PC-3 (cell line): ENCODE measurements at regions of chr18 and their contacts with region 1.

Region 1: DNA sequence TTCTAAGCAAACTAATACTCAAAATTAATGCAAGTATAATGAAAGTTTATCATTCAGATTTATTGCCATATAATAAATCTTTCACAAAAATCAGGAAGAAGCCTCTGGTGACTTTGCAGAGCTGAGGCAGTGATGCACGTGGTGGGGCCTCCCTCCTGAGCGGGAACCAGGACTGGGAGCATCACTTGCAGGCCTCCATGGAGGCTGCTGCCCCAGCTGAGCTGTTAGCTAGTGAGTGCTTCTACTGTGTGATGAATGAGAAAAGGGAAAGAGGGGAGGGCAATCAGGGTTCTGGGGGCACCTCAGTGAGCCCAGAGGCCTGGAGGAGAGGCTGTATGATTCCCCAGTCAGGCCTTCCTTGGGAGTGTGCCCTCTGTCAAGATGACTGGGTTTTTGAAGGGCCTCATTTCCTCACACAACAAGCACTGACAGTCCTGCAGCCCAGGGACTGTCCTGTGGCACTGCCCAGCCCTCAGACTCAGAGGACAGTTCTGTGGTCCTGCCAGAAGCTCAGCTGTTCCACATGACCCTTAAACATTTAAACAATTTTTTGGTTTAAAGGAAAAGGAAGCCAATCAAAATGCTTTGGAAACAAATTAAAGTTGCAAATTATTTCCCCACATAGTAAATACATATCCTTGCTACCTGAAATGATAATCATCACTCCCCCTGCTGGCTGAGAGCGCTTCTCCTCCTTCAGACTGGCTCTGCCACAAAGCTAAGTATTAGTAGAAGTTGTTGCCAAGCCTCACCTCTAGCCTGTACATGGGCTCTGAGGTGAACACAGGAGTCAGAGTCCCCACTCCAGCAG is 90.9 kb upstream of the SMAD7 start:
- DNase-seq: peak; percentile 46
- ATAC-seq: peak; percentile 78
- H3K4me3 ChIP-seq: no peak overlapping the region
- H3K27ac ChIP-seq: no peak overlapping the region
- H3K4me1 ChIP-seq: no peaks in the 10 kb centered on the region
- H3K27me3 ChIP-seq: no peaks in the 10 kb centered on the region
- CTCF ChIP-seq: peak; percentile 54

Region 2: GRCh38 chr18:48675352-48675761 is 366.3 kb before region 1 on chr18:
- CTCF ChIA-PET with region 1: no interaction called
- POLR2A ChIA-PET with region 1: no interaction called
- intact Hi-C with region 1: loop called (anchors 5 kb)
- DNase-seq: peak; percentile 67
- ATAC-seq: peak; percentile 97
- H3K4me3 ChIP-seq: no peak overlapping the region
- H3K27ac ChIP-seq: no peak overlapping the region
- H3K4me1 ChIP-seq: no peaks in the 10 kb centered on the region
- H3K27me3 ChIP-seq: no peaks in the 10 kb centered on the region
- CTCF ChIP-seq: peak; percentile 66

Region 3: DNA sequence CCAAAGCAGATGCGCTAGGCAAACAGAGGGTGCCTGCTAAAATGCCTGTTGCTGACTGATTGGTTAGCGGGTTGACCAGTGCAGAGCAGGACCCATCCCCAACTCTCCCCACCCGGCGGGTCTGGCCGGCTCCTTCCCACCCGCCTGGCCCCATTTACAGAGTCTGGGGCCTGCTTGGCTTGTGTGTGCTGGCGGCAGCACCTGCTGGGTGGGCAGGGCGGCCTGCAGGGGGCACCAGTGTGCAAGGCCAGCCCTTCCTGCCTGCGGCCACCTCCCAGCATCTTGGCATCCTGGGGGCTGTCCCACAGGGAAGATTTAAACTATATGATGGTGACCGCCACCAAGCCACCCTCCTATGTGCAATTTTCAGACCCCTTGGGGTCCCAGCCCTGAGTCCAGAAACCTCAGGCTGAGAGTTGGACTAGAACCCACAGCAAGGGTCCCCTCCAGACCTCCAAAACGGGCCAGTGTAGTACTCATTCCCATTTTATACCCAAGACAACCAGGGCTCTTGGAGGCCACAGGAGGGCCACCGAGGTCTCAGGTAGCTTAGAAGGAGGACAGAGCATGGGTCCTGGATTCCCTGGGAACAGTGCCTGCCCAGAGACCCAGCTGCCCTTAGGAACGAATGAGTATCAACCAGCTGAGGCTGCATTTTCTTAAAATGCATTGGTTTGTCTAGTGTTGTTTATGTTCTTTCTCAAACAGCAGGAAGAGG is 264.5 kb before region 1 on chr18:
- CTCF ChIA-PET with region 1: no interaction called
- POLR2A ChIA-PET with region 1: no interaction called
- intact Hi-C with region 1: loop called (anchors 5 kb)
- DNase-seq: peak; percentile 30
- ATAC-seq: peak; percentile 87
- H3K4me3 ChIP-seq: no peak overlapping the region
- H3K27ac ChIP-seq: no peak overlapping the region
- H3K4me1 ChIP-seq: no peaks in the 10 kb centered on the region
- H3K27me3 ChIP-seq: no peaks in the 10 kb centered on the region
- CTCF ChIP-seq: peak; percentile 67

Region 4: DNA sequence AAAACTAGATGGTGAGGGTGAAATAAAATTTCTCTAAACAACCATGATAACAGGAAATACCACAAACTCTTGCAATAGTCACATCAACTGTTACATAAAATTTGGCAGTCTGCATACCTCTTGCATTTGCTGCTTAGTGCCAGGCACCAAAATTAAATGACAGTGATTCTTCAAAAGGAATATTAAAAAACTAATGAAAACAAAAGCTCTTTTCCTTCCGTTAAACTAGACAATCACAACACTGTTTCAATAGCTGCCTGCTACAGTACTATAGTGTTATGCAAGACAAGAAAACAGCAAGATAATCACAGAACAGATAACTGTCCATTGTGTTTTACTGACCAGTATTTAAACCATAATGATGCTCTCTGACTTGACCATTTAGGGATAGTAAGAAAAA is 148.1 kb after region 1 on chr18:
- CTCF ChIA-PET with region 1: no interaction called
- POLR2A ChIA-PET with region 1: no interaction called
- intact Hi-C with region 1: no loop called
- DNase-seq: no peak
- ATAC-seq: no peak
- H3K4me3 ChIP-seq: no peak overlapping the region
- H3K27ac ChIP-seq: no peak overlapping the region
- H3K4me1 ChIP-seq: peaks cover 4% of the 10 kb centered on the region; the same call in 1 of the 2 replicates
- H3K27me3 ChIP-seq: no peaks in the 10 kb centered on the region
- CTCF ChIP-seq: no peak